MCF 10A (cell line): ENCODE measurements at regions of chr3 and their contacts with region 1.

Region 1: GRCh38 chr3:38383156-38383875 is 36.7 kb downstream of the XYLB start:
- DNase-seq: no peak
- H3K4me3 Mint-ChIP-seq: no peak overlapping the region
- H3K27ac Mint-ChIP-seq: no peak overlapping the region
- H3K4me1 Mint-ChIP-seq: no peaks in the 10 kb centered on the region
- H3K27me3 Mint-ChIP-seq: no peaks in the 10 kb centered on the region
- CTCF ChIP-seq: no peak

Region 2: DNA sequence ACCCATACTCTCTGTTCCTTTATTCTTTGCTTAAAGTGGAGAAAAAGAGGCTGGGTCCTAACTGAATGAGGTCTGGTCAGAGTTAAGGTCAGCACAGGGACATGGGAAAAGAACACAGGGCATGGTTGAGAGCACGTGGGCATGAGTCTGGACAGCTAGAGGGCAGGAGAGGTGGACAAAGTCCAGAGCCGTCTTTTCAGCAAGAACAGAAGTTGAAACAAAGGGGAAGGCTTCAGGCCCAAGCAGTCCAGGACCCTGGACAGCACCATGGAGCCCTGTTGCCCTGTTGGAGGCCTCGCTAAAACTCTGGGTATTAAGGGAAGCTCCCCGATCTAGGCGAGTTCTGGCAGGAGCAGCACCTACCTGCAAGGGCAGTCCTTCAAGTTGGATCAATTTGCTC is 14.0 kb after region 1 on chr3:
- CTCF ChIA-PET with region 1: interaction called, 4 read pairs
- POLR2A ChIA-PET with region 1: interaction called, 12 read pairs
- intact Hi-C with region 1: no loop called
- DNase-seq: peak; percentile 45
- H3K4me3 Mint-ChIP-seq: no peak overlapping the region
- H3K27ac Mint-ChIP-seq: no peak overlapping the region
- H3K4me1 Mint-ChIP-seq: no peaks in the 10 kb centered on the region
- H3K27me3 Mint-ChIP-seq: no peaks in the 10 kb centered on the region
- CTCF ChIP-seq: no peak